Mammary epithelial cell (primary cell): ENCODE measurements at regions of chr2 and their contacts with region 1.

Region 1: DNA sequence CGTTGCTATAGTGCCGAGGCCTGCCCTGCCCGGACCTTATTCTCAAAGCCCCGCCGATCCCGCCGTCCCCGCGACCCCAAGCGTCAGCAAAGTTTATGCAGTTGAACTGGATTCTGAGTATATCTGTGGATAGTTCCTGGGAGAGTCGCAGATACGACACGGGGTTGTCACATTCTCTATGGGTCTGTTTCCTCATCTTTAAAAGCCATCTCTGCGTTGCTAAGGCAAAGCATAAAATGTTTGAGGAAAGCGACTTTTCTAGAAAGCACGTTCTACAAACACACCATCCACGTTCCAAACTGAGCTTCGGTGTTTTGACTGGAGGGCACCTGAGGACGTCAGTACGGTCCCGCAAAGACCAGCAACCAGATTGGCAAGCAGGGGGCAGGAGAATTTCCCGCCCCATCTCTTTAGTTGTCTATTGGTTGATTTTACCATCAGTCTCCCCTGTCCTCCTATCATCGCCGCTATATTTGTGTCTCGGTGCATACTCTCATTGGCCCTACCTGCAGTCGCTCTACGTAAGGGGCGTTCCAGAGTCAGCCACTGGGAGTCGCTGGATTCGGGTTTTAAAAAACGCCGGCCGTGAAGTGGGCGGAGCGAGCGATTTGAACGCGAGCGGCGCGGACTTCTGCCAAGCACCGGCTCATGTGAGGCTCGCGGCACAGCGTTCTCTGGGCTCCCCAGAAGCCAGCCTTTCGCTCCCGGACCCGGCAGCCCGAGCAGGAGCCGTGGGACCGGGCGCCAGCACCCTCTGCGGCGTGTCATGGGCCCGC is at the start of gene CENPA:
- DNase-seq: peak; percentile 100
- H3K4me3 ChIP-seq: peak within 1 kb of the TSS; percentile 69 to 81 (median 72)
- H3K27ac ChIP-seq: peak within 1 kb of the TSS; percentile 65
- H3K4me1 ChIP-seq: peaks cover 6% of the 10 kb centered on the region
- H3K27me3 ChIP-seq: no peaks in the 10 kb centered on the region
- CTCF ChIP-seq: peak in 1 of 2 donors; percentile 24
- total RNA-seq, gene CENPA: 0.17 to 18.2 TPM

Region 2: DNA sequence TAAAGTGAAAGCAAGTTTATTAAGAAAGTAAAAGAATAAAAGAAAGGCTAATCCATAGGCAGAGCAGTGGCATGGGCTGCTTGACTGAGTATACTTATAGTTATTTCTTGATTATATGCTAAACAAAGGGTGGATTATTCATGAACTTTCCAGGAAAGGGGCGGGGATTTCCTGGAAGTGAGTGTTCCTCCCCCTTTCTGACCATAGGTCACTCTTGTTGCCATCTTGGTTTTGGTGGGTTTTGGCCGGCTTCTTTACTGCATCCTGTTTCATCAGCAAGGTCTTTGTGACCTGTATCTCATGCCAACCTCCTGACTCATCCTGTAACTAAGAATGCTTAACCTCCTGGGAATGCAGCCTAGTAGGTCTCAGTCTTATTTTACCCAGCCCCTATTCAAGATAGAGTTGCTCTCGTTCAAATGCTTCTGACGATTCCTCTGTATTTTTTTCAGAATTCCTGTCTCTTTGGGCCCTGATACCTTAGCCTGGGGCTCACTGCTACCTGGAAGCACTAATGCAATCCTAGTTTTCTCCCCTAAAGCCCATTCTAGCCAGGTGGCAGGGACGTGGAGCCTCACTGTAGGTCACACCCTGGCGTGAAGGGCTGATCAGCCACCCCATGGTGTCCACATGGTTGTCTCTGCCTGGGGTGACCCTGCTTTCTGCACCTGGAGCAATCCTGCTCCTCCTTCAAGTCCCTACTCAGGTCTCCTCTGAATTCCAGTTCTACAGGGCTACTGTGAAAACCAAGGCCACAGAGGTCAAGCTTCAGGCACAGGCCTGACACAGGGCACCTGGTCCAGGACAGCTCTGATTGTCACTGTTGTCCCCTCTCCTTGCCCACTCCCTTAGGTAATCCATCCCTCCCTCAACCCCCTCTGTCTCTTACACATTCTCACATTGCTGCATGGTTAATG is 27.5 kb before region 1 on chr2:
- CTCF ChIA-PET with region 1: no interaction called
- dilution Hi-C with region 1: no loop called
- in situ Hi-C with region 1: no loop called
- intact Hi-C with region 1: loop called (anchors 1 kb)
- DNase-seq: peak; percentile 98
- H3K4me3 ChIP-seq: no peak overlapping the region
- H3K27ac ChIP-seq: peak overlapping the region; percentile 80
- H3K4me1 ChIP-seq: peaks cover 16% of the 10 kb centered on the region
- H3K27me3 ChIP-seq: no peaks in the 10 kb centered on the region
- CTCF ChIP-seq: no peak

Region 3: GRCh38 chr2:26770986-26771602 is 14.5 kb before region 1 on chr2:
- CTCF ChIA-PET with region 1: no interaction called
- dilution Hi-C with region 1: no loop called
- in situ Hi-C with region 1: no loop called
- intact Hi-C with region 1: loop called (anchors 1 kb)
- DNase-seq: peak; percentile 83
- H3K4me3 ChIP-seq: no peak overlapping the region
- H3K27ac ChIP-seq: peak overlapping the region; percentile 6
- H3K4me1 ChIP-seq: peaks cover 45% of the 10 kb centered on the region
- H3K27me3 ChIP-seq: no peaks in the 10 kb centered on the region
- CTCF ChIP-seq: peak; percentile 42 to 54

Region 4: GRCh38 chr2:26840937-26841613 is 55.5 kb after region 1 on chr2:
- CTCF ChIA-PET with region 1: no interaction called
- dilution Hi-C with region 1: no loop called
- in situ Hi-C with region 1: no loop called
- intact Hi-C with region 1: loop called (anchors 2 kb)
- DNase-seq: peak; percentile 16
- H3K4me3 ChIP-seq: no peak overlapping the region
- H3K27ac ChIP-seq: no peak overlapping the region
- H3K4me1 ChIP-seq: no peaks in the 10 kb centered on the region
- H3K27me3 ChIP-seq: peaks cover 3% of the 10 kb centered on the region
- CTCF ChIP-seq: peak; percentile 27 to 41